Endothelial cell of umbilical vein (primary cell): ENCODE measurements at regions of chr1 and their contacts with region 1.

Region 1: DNA sequence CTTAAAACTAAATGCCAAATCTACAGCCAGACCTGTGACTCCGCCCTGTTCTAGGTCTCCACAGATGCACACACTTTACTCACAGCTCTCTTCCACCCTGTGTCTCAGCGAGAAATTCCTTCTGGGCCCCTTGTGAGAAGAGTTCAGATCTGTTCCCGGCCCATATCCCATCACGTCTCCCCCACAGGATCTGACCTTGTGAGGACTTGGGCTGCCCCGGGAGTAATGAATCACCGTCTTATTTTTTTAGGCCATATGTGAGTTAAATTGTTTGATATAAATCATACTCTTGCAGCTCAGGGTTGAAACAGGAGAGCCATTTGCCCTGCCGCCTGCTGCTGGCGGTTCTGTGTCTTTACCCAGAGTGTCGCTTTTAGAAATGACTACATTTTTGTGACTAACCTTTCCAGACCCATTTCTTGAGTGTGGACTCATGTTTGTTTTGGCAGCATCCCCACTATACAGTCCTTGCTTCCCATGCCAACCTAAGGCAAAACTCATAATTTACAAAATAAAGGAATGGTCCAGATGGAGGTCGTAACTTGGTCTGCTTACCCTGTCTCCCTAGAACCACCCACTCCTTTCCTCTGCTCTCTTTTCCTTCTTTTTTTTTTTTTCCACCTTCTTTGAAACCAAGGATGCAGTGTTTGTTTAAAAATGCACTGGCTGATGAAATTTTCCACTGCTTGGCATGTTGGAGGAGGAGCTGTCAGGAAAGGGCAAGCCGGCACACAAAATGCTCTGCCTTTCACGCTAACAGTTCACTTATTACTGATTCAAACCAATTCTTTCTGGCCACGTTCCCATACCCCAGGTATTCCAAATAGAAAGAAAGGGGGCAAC is 98.0 kb upstream of the C1orf105 start:
- DNase-seq: peak; percentile 96
- H3K4me3 ChIP-seq: peak overlapping the region in 1 of 3 experiments; percentile 37
- H3K27ac ChIP-seq: peak overlapping the region; percentile 78
- H3K4me1 ChIP-seq: peaks cover 36% of the 10 kb centered on the region
- H3K27me3 ChIP-seq: no peaks in the 10 kb centered on the region
- CTCF ChIP-seq: no peak
- POLR2A ChIP-seq: no peak

Region 2: DNA sequence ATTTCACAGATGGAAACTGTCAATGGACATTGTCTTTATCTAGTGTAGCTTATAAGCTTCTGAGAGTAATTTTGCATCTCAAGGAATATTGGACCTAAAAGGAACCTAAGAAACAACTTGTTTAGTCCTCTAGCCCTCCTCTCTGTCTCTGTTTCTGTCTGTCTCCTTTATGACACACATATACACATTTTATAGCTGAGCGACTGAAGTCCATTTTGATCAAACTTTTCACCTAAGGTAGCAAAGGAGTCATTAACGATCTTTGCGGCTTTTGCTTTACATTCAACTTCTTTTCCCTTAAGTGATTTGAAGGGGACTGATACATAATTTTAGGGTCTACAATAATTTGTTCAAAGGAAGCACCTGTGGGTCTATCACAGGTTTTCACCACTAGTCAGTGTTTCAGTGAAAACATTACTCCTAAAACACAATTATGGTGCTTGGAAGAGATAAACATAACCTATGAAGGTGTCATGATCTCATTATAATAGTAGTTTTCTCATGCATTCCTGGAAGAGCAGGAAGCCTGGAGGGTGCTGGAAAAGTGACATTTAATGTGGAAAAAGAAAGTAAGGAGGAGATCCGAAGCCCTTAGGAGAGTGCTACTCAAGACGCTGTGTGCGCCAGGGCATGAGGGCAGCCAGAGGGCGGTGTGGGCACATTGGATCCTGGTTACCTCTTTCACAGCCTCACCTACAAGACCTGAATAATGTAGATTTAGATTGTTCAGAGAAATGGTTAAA is 232.5 kb before region 1 on chr1:
- CTCF ChIA-PET with region 1: no interaction called
- POLR2A ChIA-PET with region 1: no interaction called
- dilution Hi-C with region 1: no loop called
- intact Hi-C with region 1: loop called (anchors 1 kb)
- DNase-seq: peak; percentile 67
- H3K4me3 ChIP-seq: no peak overlapping the region
- H3K27ac ChIP-seq: no peak overlapping the region
- H3K4me1 ChIP-seq: no peaks in the 10 kb centered on the region
- H3K27me3 ChIP-seq: no peaks in the 10 kb centered on the region
- CTCF ChIP-seq: peak; percentile 59 to 67
- POLR2A ChIP-seq: no peak

Region 3: GRCh38 chr1:172144445-172145061 is 177.9 kb before region 1 on chr1:
- CTCF ChIA-PET with region 1: interaction called, 3 read pairs
- POLR2A ChIA-PET with region 1: no interaction called
- dilution Hi-C with region 1: no loop called
- intact Hi-C with region 1: loop called (anchors 1 kb)
- DNase-seq: peak; percentile 76
- H3K4me3 ChIP-seq: peak overlapping the region; percentile 22 to 96 (median 38)
- H3K27ac ChIP-seq: peak overlapping the region; percentile 87
- H3K4me1 ChIP-seq: peaks cover 57% of the 10 kb centered on the region
- H3K27me3 ChIP-seq: no peaks in the 10 kb centered on the region
- CTCF ChIP-seq: no peak
- POLR2A ChIP-seq: no peak

Region 4: DNA sequence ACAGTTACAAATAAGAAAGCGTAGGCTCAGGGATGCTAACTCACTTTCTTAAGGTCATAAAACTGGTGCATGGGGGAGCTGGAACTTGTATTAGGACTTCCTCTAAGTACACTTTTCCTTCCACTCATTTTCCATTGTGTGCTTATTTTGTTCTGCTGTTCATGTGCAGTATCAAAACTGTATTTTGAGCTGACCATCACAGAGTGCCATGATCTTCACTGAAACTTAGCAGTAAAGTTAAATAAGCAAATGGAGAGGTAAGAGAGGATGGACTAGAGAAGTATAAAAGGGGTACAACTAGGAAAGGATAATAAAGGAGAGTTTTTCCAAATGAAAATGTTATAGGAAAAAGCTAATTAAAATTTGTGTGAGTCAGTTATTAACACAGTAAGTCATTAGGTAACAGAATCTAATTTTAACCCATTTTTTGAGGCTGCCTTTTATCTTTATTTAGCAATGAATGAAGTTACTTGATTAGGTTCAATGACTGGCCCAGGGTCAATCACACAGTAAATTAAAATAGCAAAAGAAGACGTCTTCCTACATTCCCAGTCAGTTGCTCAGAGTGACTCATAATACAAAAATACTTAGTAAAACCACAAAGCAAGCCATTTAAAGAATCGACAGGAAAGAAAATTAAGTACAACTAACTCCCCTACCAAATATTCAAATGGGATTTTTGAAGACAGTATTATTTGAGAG is 67.8 kb before region 1 on chr1:
- CTCF ChIA-PET with region 1: interaction called, 4 read pairs
- POLR2A ChIA-PET with region 1: no interaction called
- dilution Hi-C with region 1: no loop called
- intact Hi-C with region 1: loop called (anchors 1 kb)
- DNase-seq: peak; percentile 72
- H3K4me3 ChIP-seq: no peak overlapping the region
- H3K27ac ChIP-seq: peak overlapping the region; percentile 99
- H3K4me1 ChIP-seq: peaks cover 20% of the 10 kb centered on the region
- H3K27me3 ChIP-seq: no peaks in the 10 kb centered on the region
- CTCF ChIP-seq: no peak
- POLR2A ChIP-seq: no peak

Region 5: DNA sequence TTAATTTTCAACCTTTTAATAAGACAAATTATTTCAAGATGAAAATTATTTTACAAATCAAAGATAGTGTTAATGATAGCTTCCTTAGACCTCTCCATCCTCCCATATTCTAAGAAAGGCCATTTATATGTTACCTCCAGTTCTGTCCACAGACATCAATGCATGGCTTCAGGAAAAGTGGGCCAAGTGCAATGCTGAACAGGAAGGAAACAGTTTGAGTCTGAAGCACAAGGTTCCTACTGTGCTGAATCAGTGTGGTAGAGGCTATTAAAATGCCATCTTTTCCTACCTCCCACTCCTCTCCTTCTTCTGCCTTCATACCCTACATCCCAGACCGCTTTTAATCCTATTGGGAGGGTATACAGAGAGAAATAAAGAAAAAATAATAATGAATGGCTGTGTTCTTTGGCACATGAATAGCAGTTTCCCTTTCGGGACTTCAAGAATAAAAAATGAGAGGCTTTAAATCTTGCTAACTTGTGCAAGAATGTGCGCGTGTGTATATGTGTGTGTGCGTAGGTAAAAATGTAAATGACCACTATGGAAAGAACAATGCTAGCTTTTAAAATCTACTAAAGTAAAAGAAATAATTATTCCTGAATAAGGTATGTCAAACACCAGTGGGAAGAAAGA is 35.4 kb after region 1 on chr1:
- CTCF ChIA-PET with region 1: interaction called, 24 read pairs
- POLR2A ChIA-PET with region 1: interaction called, 12 read pairs
- dilution Hi-C with region 1: no loop called
- intact Hi-C with region 1: loop called (anchors 1 kb)
- DNase-seq: peak; percentile 76
- H3K4me3 ChIP-seq: peak overlapping the region in 1 of 3 experiments; percentile 36
- H3K27ac ChIP-seq: peak overlapping the region; percentile 95
- H3K4me1 ChIP-seq: peaks cover 48% of the 10 kb centered on the region
- H3K27me3 ChIP-seq: no peaks in the 10 kb centered on the region
- CTCF ChIP-seq: no peak
- POLR2A ChIP-seq: no peak

Region 6: DNA sequence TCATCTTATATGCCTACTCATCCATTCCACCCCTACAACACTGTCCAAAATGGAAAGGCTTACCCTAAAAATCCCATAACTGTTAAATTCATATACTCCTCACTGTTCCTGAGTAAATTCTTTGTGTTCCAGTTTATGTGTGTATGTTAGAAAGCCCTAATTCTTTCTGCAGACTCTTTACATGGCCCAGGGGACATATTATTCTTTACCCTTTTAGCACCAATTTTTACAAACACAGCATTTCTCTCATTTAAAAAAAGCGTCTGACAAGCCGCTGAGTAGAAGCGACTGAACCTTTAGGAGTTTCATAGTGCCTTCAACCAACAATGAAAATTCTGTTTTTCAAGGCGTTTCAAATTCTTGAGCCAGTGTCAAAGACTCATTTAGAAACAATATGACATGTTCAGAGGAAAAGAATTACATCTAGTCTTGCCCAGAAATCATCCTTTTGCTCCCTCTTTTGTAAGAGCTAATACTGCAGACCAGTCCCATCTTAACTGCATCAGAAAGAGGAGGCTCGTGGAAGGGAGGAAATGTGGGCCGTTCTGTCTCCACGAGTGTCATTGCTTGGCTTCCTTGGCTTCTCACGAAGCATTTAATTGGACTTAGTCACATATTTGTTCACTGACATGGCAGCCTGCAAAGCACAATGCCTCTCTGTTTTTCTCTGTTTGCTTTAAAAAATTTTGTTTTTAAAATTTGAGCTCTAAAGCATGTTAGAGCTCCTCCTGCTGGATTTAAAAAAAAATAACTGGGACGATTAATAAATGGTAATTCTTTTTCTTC is 76.7 kb after region 1 on chr1:
- CTCF ChIA-PET with region 1: interaction called, 37 read pairs
- POLR2A ChIA-PET with region 1: no interaction called
- dilution Hi-C with region 1: no loop called
- intact Hi-C with region 1: loop called (anchors 1 kb)
- DNase-seq: peak; percentile 89
- H3K4me3 ChIP-seq: no peak overlapping the region
- H3K27ac ChIP-seq: peak overlapping the region; percentile 69
- H3K4me1 ChIP-seq: peaks cover 23% of the 10 kb centered on the region
- H3K27me3 ChIP-seq: no peaks in the 10 kb centered on the region
- CTCF ChIP-seq: peak; percentile 20 to 40
- POLR2A ChIP-seq: no peak

Region 7: DNA sequence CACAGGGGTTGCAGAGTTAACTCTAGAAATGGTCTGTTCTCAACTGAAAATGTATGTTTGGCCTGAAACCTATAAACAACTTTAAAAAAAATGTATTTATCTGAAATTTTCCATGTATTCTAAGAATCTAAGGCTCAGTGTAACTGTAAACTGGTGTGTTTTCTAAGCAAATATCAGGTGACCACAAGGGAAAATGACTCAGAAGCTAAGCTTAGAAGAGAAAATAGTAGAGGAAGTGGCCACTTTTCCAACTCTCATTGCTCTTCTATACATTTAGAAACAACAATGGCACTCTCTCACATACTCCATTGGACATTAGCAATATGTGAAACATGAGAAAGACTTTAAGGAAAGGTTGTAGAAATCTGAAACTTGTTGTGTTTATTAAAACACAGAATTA is 720.8 kb after region 1 on chr1:
- CTCF ChIA-PET with region 1: no interaction called
- POLR2A ChIA-PET with region 1: no interaction called
- dilution Hi-C with region 1: no loop called
- intact Hi-C with region 1: loop called (anchors 10 kb)
- DNase-seq: peak; percentile 80
- H3K4me3 ChIP-seq: peak overlapping the region in 1 of 3 experiments; percentile 7
- H3K27ac ChIP-seq: peak overlapping the region; percentile 83
- H3K4me1 ChIP-seq: peaks cover 35% of the 10 kb centered on the region
- H3K27me3 ChIP-seq: no peaks in the 10 kb centered on the region
- CTCF ChIP-seq: no peak
- POLR2A ChIP-seq: no peak